Posterior vena cava (tissue), 2 donors: ENCODE measurements at regions of chr11 and their contacts with region 1.

Region 1: DNA sequence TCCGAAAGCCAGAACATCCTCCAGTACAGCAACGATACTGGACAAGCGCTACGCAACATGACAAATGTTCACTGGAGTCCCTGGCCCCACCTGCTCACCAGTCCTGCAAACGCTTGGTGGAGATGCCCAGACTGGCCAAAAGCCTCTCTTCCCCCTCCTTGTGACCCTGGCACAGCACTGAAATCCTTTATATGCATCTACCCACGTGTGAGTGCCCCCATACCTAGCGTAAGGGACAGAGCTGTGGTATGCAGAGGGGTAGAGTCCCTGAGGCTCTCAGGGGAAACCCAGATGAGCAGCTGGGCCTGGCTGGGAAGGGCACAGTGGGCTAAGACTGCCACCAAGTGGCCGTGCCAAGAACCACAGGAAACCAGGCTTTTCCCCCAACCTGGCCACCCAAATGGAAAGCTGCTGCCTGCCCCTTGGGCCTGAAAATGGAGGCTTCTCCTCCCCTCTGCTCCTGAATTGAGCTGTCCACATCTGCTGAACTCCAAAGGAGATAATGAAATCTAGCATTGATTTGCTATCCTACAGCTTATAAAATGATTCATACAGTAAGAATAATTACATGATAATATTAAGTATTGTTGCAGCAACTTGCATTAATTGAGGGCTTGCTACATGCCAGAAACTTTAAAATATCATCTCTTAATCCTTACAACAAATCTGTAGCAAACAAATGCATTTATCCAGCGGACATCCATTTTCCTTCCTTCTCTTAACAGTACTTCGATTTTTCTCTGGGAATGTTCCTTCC is 24.8 kb upstream of the TTC12 start:
- DNase-seq: no peak

Region 2: DNA sequence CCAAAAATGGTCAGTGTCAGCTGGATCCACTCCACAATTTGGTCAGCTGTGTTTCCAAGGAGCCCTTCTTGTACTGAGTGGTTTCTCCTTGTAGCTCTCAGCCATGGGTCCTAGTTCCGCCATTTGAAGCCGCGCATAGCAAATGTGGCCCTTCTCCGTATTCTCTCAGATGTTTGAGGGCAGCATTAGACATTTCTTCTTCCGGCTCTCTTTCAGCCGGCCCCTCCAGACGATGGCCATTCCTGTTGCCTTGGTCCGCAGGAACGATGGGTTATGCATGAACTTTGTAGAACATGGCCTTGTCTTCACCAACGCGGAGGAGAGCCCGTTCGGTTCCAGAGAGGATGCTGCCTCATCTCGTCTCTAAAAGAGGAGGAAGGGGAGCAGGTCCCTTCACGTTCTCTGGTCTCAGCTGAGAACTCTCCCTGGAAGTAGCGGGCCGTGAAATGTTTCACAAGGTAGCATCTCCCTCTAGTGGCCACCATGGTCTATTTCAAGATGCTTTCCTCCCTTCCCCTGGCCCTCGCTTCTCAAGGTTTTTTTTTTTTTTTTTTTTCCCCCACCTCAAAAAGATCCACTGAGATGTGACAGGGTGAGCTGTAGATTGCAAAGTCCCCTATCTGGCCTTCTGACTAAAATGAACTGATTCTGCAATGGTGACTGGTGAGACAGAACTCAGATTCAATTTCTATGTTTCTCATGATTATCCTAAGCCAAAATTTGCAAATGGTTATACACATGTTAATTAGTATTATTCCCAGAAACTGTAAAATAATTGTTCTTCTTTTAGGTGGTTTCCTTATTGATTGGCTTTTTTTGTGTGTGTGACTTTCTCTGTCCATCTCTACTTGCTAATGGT is 1009.1 kb before region 1 on chr11:
- intact Hi-C with region 1: loop called (anchors 5 to 10 kb)
- DNase-seq: no peak

Region 3: GRCh38 chr11:112289588-112290492 is 999.8 kb before region 1 on chr11:
- intact Hi-C with region 1: loop called (anchors 5 to 10 kb)
- DNase-seq: peak; percentile 95

Region 4: DNA sequence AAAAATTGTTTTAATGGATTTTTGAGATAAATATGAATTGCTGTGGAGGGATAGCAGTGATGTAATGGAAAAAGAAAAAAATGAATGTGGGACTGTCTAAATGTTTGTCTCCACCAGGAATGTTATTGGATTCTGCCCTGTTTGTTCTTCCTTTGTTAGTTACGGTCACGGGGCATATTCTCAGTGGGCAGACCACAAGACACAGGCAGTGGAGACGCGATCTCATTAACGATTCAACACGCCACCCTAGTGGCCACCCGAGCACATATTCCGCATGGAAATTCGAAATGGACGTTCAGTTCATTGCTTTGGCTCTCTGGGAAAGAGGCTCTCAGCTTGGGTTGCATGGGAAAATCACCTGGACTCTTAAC is 127.0 kb before region 1 on chr11:
- intact Hi-C with region 1: no loop called
- DNase-seq: no peak

Region 5: DNA sequence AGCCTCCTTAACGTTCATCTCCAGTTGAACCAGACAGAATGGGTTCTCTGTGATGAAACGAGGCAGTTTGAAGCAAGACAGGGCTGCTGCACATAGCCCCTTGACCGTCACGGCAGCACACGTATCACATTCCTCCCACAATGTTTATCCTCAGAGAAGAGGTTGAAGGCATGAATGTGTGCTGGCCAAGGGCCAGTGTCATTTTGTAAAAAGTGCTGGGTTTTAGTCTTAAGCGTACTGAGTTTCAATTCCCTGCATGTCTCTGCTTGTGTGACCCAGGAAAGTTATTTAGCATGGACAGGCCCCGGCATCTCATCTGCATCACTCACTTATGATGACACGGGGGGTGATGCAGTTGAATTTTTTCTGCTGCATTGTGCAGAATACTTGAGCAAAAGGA is 56.4 kb after region 1 on chr11:
- intact Hi-C with region 1: no loop called
- DNase-seq: no peak

Region 6: GRCh38 chr11:113457784-113458183 is 168.2 kb after region 1 on chr11:
- intact Hi-C with region 1: no loop called
- DNase-seq: no peak